Naive thymus-derived CD4-positive, alpha-beta T cell (primary cell): ENCODE measurements at regions of chr1 and their contacts with region 1.

Region 1: DNA sequence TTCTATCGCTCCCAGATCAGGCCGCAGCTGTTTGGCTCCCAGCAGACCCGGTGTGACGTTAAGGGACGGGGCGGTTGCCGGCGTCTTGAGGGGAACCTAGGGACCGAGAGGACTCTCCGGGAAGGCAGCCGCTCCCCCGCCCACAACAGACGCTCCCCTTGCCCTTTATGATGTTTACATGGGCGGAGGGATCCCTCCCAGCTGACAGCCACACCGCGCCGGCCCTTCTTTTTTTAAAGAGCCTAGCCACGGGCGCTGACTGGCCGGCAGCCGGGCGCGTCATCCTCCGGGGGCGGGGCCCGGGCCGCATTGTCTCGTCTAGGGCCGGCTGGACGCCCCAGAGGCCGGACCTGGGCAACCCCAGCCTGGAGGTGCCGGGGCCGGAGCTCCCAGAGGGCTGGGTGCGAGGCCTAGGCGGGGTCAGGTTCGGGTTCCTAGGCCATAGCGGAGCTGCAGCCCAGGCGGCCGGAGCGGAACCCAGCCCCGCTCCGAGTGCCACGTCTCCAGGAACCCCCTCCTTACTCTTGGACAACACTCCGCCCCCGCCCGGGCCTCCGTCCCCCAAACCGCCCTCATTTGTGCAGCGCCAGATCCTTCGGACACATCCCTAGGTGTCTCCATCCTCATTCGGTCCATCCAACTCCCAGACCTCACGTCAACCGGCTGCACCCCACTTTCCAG is at the start of gene PCAT6:
- DNase-seq: peak; percentile 70 to 90 (median 83)
- ATAC-seq: peak; percentile 90
- H3K4me3 ChIP-seq: peak within 1 kb of the TSS; percentile 84
- H3K4me3 Mint-ChIP-seq: peak within 1 kb of the TSS; percentile 88 to 94 (median 90)
- H3K27ac ChIP-seq: peak within 1 kb of the TSS; percentile 70
- H3K27ac Mint-ChIP-seq: peak within 1 kb of the TSS; percentile 49 to 93 (median 90)
- H3K4me1 ChIP-seq: peaks cover 19% of the 10 kb centered on the region in 2 donors
- H3K4me1 Mint-ChIP-seq: peaks cover 27 to 42% (median 39%) of the 10 kb centered on the region in 7 donors
- H3K27me3 ChIP-seq: no peaks in the 10 kb centered on the region
- H3K27me3 Mint-ChIP-seq: peaks cover 0 to 18% (median 0%) of the 10 kb centered on the region in 5 donors
- total RNA-seq, gene PCAT6: 0.70 to 1.5 (median 0.94) TPM in 4 of 5 experiments, not detected in the other

Region 2: GRCh38 chr1:202760589-202760988 is 50.2 kb before region 1 on chr1:
- CTCF ChIA-PET with region 1: no interaction called
- POLR2A ChIA-PET with region 1: no interaction called
- intact Hi-C with region 1: loop called in 1 of 2 experiments (anchors 5 kb)
- DNase-seq: no peak
- ATAC-seq: no peak
- H3K4me3 ChIP-seq: no peak overlapping the region
- H3K4me3 Mint-ChIP-seq: no peak overlapping the region
- H3K27ac ChIP-seq: no peak overlapping the region
- H3K27ac Mint-ChIP-seq: peak overlapping the region in 1 of 9 donors; percentile 52
- H3K4me1 ChIP-seq: no peaks in the 10 kb centered on the region
- H3K4me1 Mint-ChIP-seq: peaks cover 0 to 3% (median 0%) of the 10 kb centered on the region in 7 donors
- H3K27me3 ChIP-seq: no peaks in the 10 kb centered on the region
- H3K27me3 Mint-ChIP-seq: no peaks in the 10 kb centered on the region

Region 3: GRCh38 chr1:202852163-202852904 is 41.6 kb after region 1 on chr1:
- CTCF ChIA-PET with region 1: no interaction called
- POLR2A ChIA-PET with region 1: no interaction called
- intact Hi-C with region 1: loop called in 1 of 2 experiments (anchors 1 kb)
- DNase-seq: peak in 3 of 9 donors; percentile 20 to 43 (median 25)
- ATAC-seq: peak; percentile 70
- H3K4me3 ChIP-seq: no peak overlapping the region
- H3K4me3 Mint-ChIP-seq: no peak overlapping the region
- H3K27ac ChIP-seq: no peak overlapping the region
- H3K27ac Mint-ChIP-seq: peak overlapping the region in 2 of 9 donors; percentile 14 to 53
- H3K4me1 ChIP-seq: no peaks in the 10 kb centered on the region
- H3K4me1 Mint-ChIP-seq: peaks cover 0 to 27% (median 0%) of the 10 kb centered on the region in 7 donors
- H3K27me3 ChIP-seq: no peaks in the 10 kb centered on the region
- H3K27me3 Mint-ChIP-seq: no peaks in the 10 kb centered on the region

Region 4: GRCh38 chr1:202957733-202958543 is 147.2 kb after region 1 on chr1 and contains the start of gene ADIPOR1:
- CTCF ChIA-PET with region 1: no interaction called
- POLR2A ChIA-PET with region 1: interaction called, 8 read pairs
- intact Hi-C with region 1: loop called (anchors 1 to 2 kb)
- DNase-seq: peak; percentile 88 to 96 (median 94)
- ATAC-seq: peak; percentile 99
- H3K4me3 ChIP-seq: peak within 1 kb of the TSS; percentile 84
- H3K4me3 Mint-ChIP-seq: peak within 1 kb of the TSS; percentile 76 to 97 (median 92)
- H3K27ac ChIP-seq: peak within 1 kb of the TSS; percentile 95
- H3K27ac Mint-ChIP-seq: peak within 1 kb of the TSS; percentile 86 to 98 (median 95)
- H3K4me1 ChIP-seq: peaks cover 19 to 39% of the 10 kb centered on the region in 2 donors
- H3K4me1 Mint-ChIP-seq: peaks cover 20 to 55% (median 52%) of the 10 kb centered on the region in 7 donors
- H3K27me3 ChIP-seq: no peaks in the 10 kb centered on the region
- H3K27me3 Mint-ChIP-seq: no peaks in the 10 kb centered on the region
- total RNA-seq, gene ADIPOR1: 51.9 to 84.5 (median 69.6) TPM

Region 5: GRCh38 chr1:203006948-203007871 is 196.5 kb after region 1 on chr1 and contains the start of gene TMEM183A:
- CTCF ChIA-PET with region 1: no interaction called
- POLR2A ChIA-PET with region 1: interaction called, 6 read pairs
- intact Hi-C with region 1: loop called (anchors 2 kb)
- DNase-seq: peak; percentile 77 to 95 (median 92)
- ATAC-seq: peak; percentile 96
- H3K4me3 ChIP-seq: peak within 1 kb of the TSS; percentile 91
- H3K4me3 Mint-ChIP-seq: peak within 1 kb of the TSS; percentile 91 to 100 (median 96)
- H3K27ac ChIP-seq: peak within 1 kb of the TSS; percentile 90
- H3K27ac Mint-ChIP-seq: peak within 1 kb of the TSS; percentile 93 to 99 (median 98)
- H3K4me1 ChIP-seq: peaks cover 10 to 14% of the 10 kb centered on the region in 2 donors
- H3K4me1 Mint-ChIP-seq: peaks cover 24 to 46% (median 36%) of the 10 kb centered on the region in 7 donors
- H3K27me3 ChIP-seq: no peaks in the 10 kb centered on the region
- H3K27me3 Mint-ChIP-seq: peaks cover 0 to 4% (median 0%) of the 10 kb centered on the region in 5 donors
- total RNA-seq, gene TMEM183A: 61.4 to 134 (median 77.0) TPM

Region 6: DNA sequence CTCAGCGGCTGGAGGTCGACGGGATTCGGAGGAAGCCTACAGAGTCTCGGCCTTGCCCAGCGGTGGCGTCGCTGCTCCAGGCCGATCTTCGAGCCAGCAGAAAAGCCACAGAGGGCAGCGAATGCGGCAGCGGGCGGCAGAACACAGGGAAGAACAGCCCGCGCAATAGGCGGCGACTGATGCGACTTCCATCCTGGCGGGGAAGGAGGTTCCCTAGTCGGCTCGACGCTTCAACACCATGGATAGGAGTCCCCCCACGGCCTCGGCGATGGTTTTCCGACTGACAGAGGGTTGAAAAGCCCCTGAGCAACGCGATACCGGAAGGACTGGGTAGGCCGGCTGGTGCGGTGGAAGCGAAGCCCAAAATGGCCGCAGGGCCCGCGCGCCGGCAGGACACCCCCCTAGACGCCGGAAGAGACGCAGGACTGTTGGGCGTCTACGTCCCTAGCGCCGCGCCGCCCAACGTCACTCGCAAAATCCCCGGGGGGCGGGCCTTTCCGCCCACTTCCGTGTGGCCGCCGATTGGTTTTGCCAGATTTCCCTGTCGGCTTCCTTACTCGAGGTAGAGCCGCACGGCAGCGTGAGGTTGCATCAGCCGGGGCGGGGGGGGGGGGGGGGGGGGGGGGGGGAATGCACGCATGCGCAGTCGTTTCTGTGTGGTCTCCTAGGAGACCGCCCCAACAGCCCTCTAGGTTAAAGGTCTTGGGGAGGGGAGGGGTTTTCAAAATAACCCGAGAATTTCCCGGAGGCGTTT is 1600.9 kb after region 1 on chr1 and contains the start of gene PPP1R15B:
- CTCF ChIA-PET with region 1: no interaction called
- POLR2A ChIA-PET with region 1: no interaction called
- intact Hi-C with region 1: loop called in 1 of 2 experiments (anchors 5 kb)
- DNase-seq: peak; percentile 92 to 99 (median 98)
- ATAC-seq: peak; percentile 91
- H3K4me3 ChIP-seq: peak within 1 kb of the TSS; percentile 99
- H3K4me3 Mint-ChIP-seq: peak within 1 kb of the TSS; percentile 92 to 99 (median 97)
- H3K27ac ChIP-seq: peak within 1 kb of the TSS; percentile 100
- H3K27ac Mint-ChIP-seq: peak within 1 kb of the TSS; percentile 97 to 100 (median 99)
- H3K4me1 ChIP-seq: peaks cover 0 to 5% of the 10 kb centered on the region in 2 donors
- H3K4me1 Mint-ChIP-seq: peaks cover 8 to 23% (median 14%) of the 10 kb centered on the region in 7 donors
- H3K27me3 ChIP-seq: no peaks in the 10 kb centered on the region
- H3K27me3 Mint-ChIP-seq: no peaks in the 10 kb centered on the region
- total RNA-seq, gene PPP1R15B: 69.5 to 175 (median 73.0) TPM